ENCODE measurements at regions of chr10 and their contacts with region 1.

Region 1: GRCh38 chr10:58781873-58782488 is 269.3 kb downstream of the BICC1 start:
- DNase-seq: peak; percentile 32
- H3K4me3 ChIP-seq: no peak overlapping the region
- H3K27ac ChIP-seq: no peak overlapping the region
- H3K4me1 ChIP-seq: no peaks in the 10 kb centered on the region
- H3K27me3 ChIP-seq: no peaks in the 10 kb centered on the region
- CTCF ChIP-seq: peak; percentile 25 to 40
- POLR2A ChIP-seq: no peak

Region 2: DNA sequence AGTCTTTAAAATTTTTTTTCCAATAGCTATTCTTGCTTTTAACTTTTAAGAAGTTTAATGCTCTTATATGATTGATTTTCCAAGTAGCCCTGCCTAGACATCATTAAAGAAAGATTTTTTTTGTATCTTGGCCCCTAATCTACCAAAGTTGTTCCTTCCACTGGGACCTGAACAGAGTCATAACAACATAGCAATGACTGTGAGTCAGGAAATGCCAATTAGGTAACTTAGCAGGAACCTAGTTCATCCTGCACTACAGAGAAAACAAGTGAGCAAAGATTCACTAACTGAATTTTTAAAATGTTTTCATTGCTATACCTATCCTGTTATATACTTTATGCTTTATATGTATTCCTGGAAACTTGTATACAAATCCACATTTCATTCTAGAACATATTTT is 15.4 kb after region 1 on chr10:
- CTCF ChIA-PET with region 1: no interaction called
- POLR2A ChIA-PET with region 1: no interaction called
- dilution Hi-C with region 1: no loop called
- intact Hi-C with region 1: no loop called
- DNase-seq: no peak
- H3K4me3 ChIP-seq: no peak overlapping the region
- H3K27ac ChIP-seq: no peak overlapping the region
- H3K4me1 ChIP-seq: peaks cover 4% of the 10 kb centered on the region
- H3K27me3 ChIP-seq: no peaks in the 10 kb centered on the region
- CTCF ChIP-seq: no peak
- POLR2A ChIP-seq: no peak

Region 3: DNA sequence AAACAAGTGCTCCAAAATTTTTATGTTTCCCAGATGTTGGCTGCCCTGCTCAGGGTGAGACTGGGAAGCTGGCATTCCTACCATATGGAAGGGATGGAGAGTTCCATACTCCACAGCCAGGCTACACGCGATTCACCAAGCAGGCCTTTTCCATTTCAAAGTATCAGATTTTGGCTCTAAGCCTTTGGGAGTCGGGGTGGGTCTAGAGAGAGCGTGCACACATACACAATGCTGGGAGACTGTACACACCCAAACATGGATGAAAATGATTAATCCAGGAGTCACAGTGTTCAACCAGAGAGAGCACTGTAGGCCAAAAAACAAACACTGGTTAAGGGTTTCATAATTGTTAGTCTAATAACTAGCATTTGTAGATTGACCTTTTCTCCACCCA is 25.6 kb after region 1 on chr10:
- CTCF ChIA-PET with region 1: no interaction called
- POLR2A ChIA-PET with region 1: no interaction called
- dilution Hi-C with region 1: no loop called
- intact Hi-C with region 1: no loop called
- DNase-seq: no peak
- H3K4me3 ChIP-seq: no peak overlapping the region
- H3K27ac ChIP-seq: no peak overlapping the region
- H3K4me1 ChIP-seq: no peaks in the 10 kb centered on the region
- H3K27me3 ChIP-seq: no peaks in the 10 kb centered on the region
- CTCF ChIP-seq: no peak
- POLR2A ChIP-seq: no peak

Region 4: DNA sequence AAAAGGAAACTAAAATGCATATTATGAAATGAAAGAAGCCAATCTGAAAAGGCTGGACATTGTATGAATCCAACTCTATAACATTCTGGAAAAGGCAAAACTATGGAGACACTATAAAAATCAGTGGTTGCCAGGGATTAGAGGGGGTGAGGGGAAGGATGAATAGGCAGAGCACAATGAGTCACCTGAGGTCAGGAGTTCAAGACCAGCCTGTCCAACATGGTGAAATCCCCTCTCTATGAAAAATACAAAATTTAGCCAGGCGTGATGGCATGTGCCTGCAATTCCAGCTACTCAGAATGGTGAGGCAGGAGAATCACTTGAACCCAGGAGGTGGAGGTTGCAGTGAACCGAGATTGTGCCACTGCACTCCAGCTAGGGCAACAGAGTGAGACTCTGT is 69.6 kb after region 1 on chr10:
- CTCF ChIA-PET with region 1: no interaction called
- POLR2A ChIA-PET with region 1: no interaction called
- dilution Hi-C with region 1: no loop called
- intact Hi-C with region 1: loop called (anchors 2 kb)
- DNase-seq: no peak
- H3K4me3 ChIP-seq: no peak overlapping the region
- H3K27ac ChIP-seq: no peak overlapping the region
- H3K4me1 ChIP-seq: no peaks in the 10 kb centered on the region
- H3K27me3 ChIP-seq: no peaks in the 10 kb centered on the region
- CTCF ChIP-seq: no peak
- POLR2A ChIP-seq: no peak

Region 5: GRCh38 chr10:59181668-59182067 is 399.7 kb after region 1 on chr10:
- CTCF ChIA-PET with region 1: no interaction called
- POLR2A ChIA-PET with region 1: no interaction called
- dilution Hi-C with region 1: no loop called
- intact Hi-C with region 1: loop called (anchors 1 kb)
- DNase-seq: peak; percentile 43
- H3K4me3 ChIP-seq: no peak overlapping the region
- H3K27ac ChIP-seq: no peak overlapping the region
- H3K4me1 ChIP-seq: peaks cover under 1% of the 10 kb centered on the region
- H3K27me3 ChIP-seq: peaks cover 4 to 11% of the 10 kb centered on the region in 2 experiments
- CTCF ChIP-seq: peak; percentile 8 to 11
- POLR2A ChIP-seq: no peak

Region 6: DNA sequence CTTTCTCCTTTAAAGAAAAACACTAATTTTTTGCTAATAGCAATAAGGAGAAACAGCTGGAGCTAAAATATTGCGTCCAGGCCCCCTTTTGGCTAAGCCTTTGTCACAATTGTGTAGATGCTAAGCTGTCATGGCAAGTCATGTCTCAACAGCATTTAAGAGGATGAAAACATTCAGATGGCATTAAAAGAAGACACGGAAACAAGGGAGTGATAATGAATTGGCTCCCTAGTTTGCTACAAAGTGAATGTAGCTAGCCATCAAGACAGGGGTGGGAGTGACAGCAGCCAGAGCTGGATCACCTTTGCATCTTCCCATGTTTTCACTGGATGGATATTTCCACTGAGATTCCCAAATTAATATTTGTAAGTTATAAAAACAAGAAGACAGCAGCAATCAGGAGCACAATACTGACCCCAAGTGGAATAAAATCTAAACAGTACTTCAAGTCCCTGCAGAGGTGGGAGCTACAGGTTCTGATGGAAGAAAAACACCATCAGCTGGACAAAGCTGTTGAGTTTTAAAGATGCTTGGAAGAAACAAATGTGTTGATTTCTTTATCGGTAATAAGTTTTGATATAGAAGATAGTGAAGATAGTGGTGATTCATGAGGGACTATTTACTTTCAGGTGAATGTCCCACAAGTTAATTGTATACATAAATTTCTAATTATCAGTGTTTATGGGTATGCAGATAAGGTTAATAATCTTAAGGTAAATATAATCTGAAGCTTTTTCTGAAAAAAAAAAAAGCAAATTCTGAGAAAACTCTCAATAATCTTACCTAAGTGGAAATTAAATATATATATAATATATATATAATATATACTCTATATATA is 798.3 kb after region 1 on chr10:
- CTCF ChIA-PET with region 1: no interaction called
- POLR2A ChIA-PET with region 1: no interaction called
- dilution Hi-C with region 1: no loop called
- intact Hi-C with region 1: loop called (anchors 5 kb)
- DNase-seq: peak; percentile 45
- H3K4me3 ChIP-seq: no peak overlapping the region
- H3K27ac ChIP-seq: no peak overlapping the region
- H3K4me1 ChIP-seq: no peaks in the 10 kb centered on the region
- H3K27me3 ChIP-seq: no peaks in the 10 kb centered on the region
- CTCF ChIP-seq: peak; percentile 7 to 18
- POLR2A ChIP-seq: no peak

Region 7: GRCh38 chr10:60048091-60048501 is 1266.1 kb after region 1 on chr10:
- CTCF ChIA-PET with region 1: no interaction called
- POLR2A ChIA-PET with region 1: no interaction called
- dilution Hi-C with region 1: no loop called
- intact Hi-C with region 1: loop called (anchors 10 kb)
- DNase-seq: peak; percentile 18
- H3K4me3 ChIP-seq: no peak overlapping the region
- H3K27ac ChIP-seq: no peak overlapping the region
- H3K4me1 ChIP-seq: no peaks in the 10 kb centered on the region
- H3K27me3 ChIP-seq: no peaks in the 10 kb centered on the region
- CTCF ChIP-seq: no peak
- POLR2A ChIP-seq: no peak

Measured in endothelial cell of umbilical vein (primary cell).